ENCODE measurements at regions of chr22 and their contacts with region 1.

Region 1: GRCh38 chr22:50041361-50042065 is 16.6 kb downstream of the TTLL8 start:
- DNase-seq: peak; percentile 17 to 56
- ATAC-seq: no peak
- H3K4me3 ChIP-seq: no peak overlapping the region
- H3K27ac ChIP-seq: no peak overlapping the region
- H3K4me1 ChIP-seq: no peaks in the 10 kb centered on the region
- H3K27me3 ChIP-seq: no peaks in the 10 kb centered on the region

Region 2: DNA sequence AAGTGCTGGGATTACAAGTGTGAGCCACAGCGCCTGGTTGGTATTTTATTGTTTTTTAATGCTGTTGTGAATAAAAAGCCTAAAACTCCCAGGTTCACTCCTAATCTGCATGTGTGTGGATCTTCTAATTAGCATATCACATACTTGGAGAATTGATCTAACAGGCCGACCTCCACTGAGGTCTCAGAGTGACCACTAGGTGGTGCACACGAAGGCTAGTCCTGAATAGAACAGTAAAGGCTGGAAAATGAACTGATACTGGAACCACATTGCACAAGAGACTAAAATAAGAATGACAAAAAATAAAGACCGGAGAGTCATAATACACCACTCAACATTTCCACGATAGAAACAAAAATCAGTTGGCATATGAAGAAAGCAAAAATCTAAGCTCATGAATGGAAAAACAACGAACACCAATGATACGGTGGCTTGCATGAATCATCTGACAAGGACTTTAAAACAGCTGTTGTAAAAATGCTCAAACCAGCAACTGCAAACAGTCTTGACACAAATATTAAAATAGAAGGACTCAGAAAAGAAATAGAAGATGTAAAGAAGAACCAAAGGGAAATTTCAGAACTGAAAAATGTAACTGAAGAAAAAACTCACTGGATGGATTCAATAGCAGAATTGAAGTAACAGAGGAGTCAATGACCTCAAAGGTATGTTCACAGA is 61.8 kb before region 1 on chr22:
- intact Hi-C with region 1: no loop called
- DNase-seq: peak; percentile 38 to 51
- ATAC-seq: peak; percentile 55
- H3K4me3 ChIP-seq: no peak overlapping the region
- H3K27ac ChIP-seq: no peak overlapping the region
- H3K4me1 ChIP-seq: no peaks in the 10 kb centered on the region
- H3K27me3 ChIP-seq: no peaks in the 10 kb centered on the region

Region 3: GRCh38 chr22:50074551-50075530 is 33.3 kb after region 1 on chr22:
- intact Hi-C with region 1: loop called in 1 of 2 experiments (anchors 2 kb)
- DNase-seq: peak in 1 of 2 donors; percentile 62
- ATAC-seq: no peak
- H3K4me3 ChIP-seq: no peak overlapping the region
- H3K27ac ChIP-seq: no peak overlapping the region
- H3K4me1 ChIP-seq: no peaks in the 10 kb centered on the region
- H3K27me3 ChIP-seq: no peaks in the 10 kb centered on the region